PC-3 (cell line): ENCODE measurements at regions of chr20 and their contacts with region 1.

Region 1: GRCh38 chr20:47693692-47694354 is 91.5 kb downstream of the SULF2 start:
- DNase-seq: no peak
- ATAC-seq: no peak
- H3K4me3 ChIP-seq: no peak overlapping the region
- H3K27ac ChIP-seq: no peak overlapping the region
- H3K4me1 ChIP-seq: no peaks in the 10 kb centered on the region
- H3K27me3 ChIP-seq: no peaks in the 10 kb centered on the region
- CTCF ChIP-seq: no peak

Region 2: GRCh38 chr20:47922252-47922651 is 228.4 kb after region 1 on chr20:
- CTCF ChIA-PET with region 1: no interaction called
- POLR2A ChIA-PET with region 1: interaction called, 15 read pairs
- intact Hi-C with region 1: no loop called
- DNase-seq: peak; percentile 86
- ATAC-seq: peak; percentile 69
- H3K4me3 ChIP-seq: peak overlapping the region; percentile 53; the same call in 1 of the 2 replicates
- H3K27ac ChIP-seq: peak overlapping the region; percentile 86
- H3K4me1 ChIP-seq: peaks cover 53% of the 10 kb centered on the region
- H3K27me3 ChIP-seq: no peaks in the 10 kb centered on the region
- CTCF ChIP-seq: no peak